ENCODE measurements at regions of chr20 and their contacts with region 1.

Region 1: GRCh38 chr20:16761305-16761829 is 13.2 kb downstream of the OTOR start:
- DNase-seq: peak in 8 of 9 experiments; percentile 18 to 74 (median 48)
- ATAC-seq: peak; percentile 69
- H3K4me3 ChIP-seq: no peak overlapping the region
- H3K4me3 Mint-ChIP-seq: no peak overlapping the region
- H3K27ac ChIP-seq: no peak overlapping the region
- H3K27ac Mint-ChIP-seq: no peak overlapping the region
- H3K4me1 ChIP-seq: no peaks in the 10 kb centered on the region
- H3K4me1 Mint-ChIP-seq: no peaks in the 10 kb centered on the region
- H3K27me3 ChIP-seq: no peaks in the 10 kb centered on the region
- H3K27me3 Mint-ChIP-seq: peaks cover 9% of the 10 kb centered on the region
- CTCF ChIP-seq: peak; percentile 61

Region 2: GRCh38 chr20:15708984-15709598 is 1052.3 kb before region 1 on chr20:
- CTCF ChIA-PET with region 1: no interaction called
- POLR2A ChIA-PET with region 1: no interaction called
- intact Hi-C with region 1: loop called in 1 of 2 experiments (anchors 5 kb)
- DNase-seq: peak in 6 of 9 experiments; percentile 4 to 24 (median 12)
- ATAC-seq: no peak
- H3K4me3 ChIP-seq: no peak overlapping the region
- H3K4me3 Mint-ChIP-seq: no peak overlapping the region
- H3K27ac ChIP-seq: no peak overlapping the region
- H3K27ac Mint-ChIP-seq: no peak overlapping the region
- H3K4me1 ChIP-seq: no peaks in the 10 kb centered on the region
- H3K4me1 Mint-ChIP-seq: no peaks in the 10 kb centered on the region
- H3K27me3 ChIP-seq: no peaks in the 10 kb centered on the region
- H3K27me3 Mint-ChIP-seq: no peaks in the 10 kb centered on the region
- CTCF ChIP-seq: no peak

Region 3: GRCh38 chr20:16517946-16518783 is 243.2 kb before region 1 on chr20:
- CTCF ChIA-PET with region 1: interaction called, 9 read pairs
- POLR2A ChIA-PET with region 1: no interaction called
- intact Hi-C with region 1: loop called (anchors 1 to 2 kb)
- DNase-seq: peak in 2 of 9 experiments; percentile 19 to 27
- ATAC-seq: no peak
- H3K4me3 ChIP-seq: no peak overlapping the region
- H3K4me3 Mint-ChIP-seq: no peak overlapping the region
- H3K27ac ChIP-seq: no peak overlapping the region
- H3K27ac Mint-ChIP-seq: no peak overlapping the region
- H3K4me1 ChIP-seq: no peaks in the 10 kb centered on the region
- H3K4me1 Mint-ChIP-seq: no peaks in the 10 kb centered on the region
- H3K27me3 ChIP-seq: no peaks in the 10 kb centered on the region
- H3K27me3 Mint-ChIP-seq: no peaks in the 10 kb centered on the region
- CTCF ChIP-seq: peak; percentile 21

Region 4: DNA sequence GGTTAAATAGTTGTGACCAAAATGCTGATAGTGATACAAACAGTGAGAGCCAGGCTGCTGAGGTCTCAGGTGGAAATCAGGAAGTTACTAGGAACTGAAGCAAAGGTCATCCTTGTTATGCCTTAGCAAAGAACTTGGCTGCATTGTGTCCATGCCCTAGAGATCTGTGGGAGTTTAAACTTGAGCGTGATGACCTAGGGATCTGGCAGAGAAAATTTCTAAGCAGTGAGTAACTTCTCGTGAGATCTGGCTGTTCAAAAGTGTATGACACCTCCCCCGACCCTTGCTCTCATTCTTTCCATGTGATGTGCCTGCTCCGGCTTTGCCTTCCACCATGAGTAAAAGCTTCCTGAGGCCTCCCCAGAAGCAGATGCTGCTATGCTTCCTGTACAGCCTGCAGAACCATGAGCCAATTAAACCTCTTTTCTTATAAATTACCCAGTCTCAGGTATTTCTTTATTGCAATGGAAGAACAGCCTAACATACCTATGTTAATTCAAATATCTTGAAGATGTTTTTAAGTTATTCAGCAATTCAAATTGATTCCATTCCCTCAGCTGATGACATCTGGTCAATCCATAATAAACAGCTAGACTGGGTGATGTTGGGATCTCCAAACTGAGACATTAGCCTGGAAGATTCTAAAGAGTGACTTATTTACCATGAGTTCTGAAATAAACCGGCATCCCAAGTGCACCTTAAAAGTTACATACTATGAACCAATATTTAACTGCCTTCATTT is 221.9 kb before region 1 on chr20:
- CTCF ChIA-PET with region 1: no interaction called
- POLR2A ChIA-PET with region 1: no interaction called
- intact Hi-C with region 1: no loop called
- DNase-seq: no peak
- ATAC-seq: no peak
- H3K4me3 ChIP-seq: no peak overlapping the region
- H3K4me3 Mint-ChIP-seq: no peak overlapping the region
- H3K27ac ChIP-seq: no peak overlapping the region
- H3K27ac Mint-ChIP-seq: no peak overlapping the region
- H3K4me1 ChIP-seq: no peaks in the 10 kb centered on the region
- H3K4me1 Mint-ChIP-seq: no peaks in the 10 kb centered on the region
- H3K27me3 ChIP-seq: no peaks in the 10 kb centered on the region
- H3K27me3 Mint-ChIP-seq: no peaks in the 10 kb centered on the region
- CTCF ChIP-seq: no peak

Region 5: DNA sequence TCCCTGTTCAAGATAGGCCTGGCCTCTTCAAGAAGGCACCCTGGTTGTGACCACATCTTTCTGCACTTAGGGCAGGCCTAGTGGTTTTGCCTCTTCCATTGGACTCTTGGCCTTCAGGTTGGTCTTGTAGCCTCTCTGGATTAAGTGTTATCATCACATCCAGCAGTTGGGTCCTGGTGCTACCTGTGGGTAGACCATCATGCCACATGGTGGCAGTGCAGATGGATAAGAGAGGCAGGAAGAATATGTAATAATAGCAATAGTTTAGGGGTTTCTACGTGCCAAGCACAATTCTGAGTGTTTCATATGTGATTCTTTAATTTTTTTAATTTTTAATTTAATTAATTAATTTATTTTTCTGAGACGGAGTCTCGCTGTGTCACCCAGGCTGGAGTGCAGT is 60.1 kb before region 1 on chr20:
- CTCF ChIA-PET with region 1: interaction called, 11 read pairs
- POLR2A ChIA-PET with region 1: no interaction called
- intact Hi-C with region 1: loop called (anchors 1 kb)
- DNase-seq: peak in 5 of 9 experiments; percentile 17 to 58 (median 33)
- ATAC-seq: peak; percentile 44
- H3K4me3 ChIP-seq: no peak overlapping the region
- H3K4me3 Mint-ChIP-seq: no peak overlapping the region
- H3K27ac ChIP-seq: no peak overlapping the region
- H3K27ac Mint-ChIP-seq: no peak overlapping the region
- H3K4me1 ChIP-seq: no peaks in the 10 kb centered on the region
- H3K4me1 Mint-ChIP-seq: no peaks in the 10 kb centered on the region
- H3K27me3 ChIP-seq: no peaks in the 10 kb centered on the region
- H3K27me3 Mint-ChIP-seq: peaks cover 36% of the 10 kb centered on the region
- CTCF ChIP-seq: peak; percentile 54

Region 6: DNA sequence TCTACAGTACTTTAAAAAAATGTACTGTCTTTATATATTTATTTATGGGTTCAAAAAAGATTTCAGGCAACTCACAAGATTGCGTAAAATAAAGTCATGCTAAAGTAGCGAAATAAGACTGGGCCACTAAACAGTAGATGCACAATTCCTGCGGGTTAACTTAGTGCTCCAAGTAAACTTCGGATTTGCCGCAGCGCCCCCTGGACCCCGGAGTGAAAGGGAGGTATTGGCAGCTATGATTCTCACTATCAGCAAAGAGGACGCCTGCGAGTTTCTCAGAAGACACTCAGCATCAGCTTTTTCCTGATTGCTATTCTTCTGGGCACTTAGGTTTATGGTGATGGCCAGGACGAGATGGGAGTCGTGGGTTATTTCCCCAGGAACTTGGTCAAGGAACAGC is 11.8 kb before region 1 on chr20:
- CTCF ChIA-PET with region 1: interaction called, 12 read pairs
- POLR2A ChIA-PET with region 1: no interaction called
- intact Hi-C with region 1: no loop called
- DNase-seq: no peak
- ATAC-seq: no peak
- H3K4me3 ChIP-seq: no peak overlapping the region
- H3K4me3 Mint-ChIP-seq: no peak overlapping the region
- H3K27ac ChIP-seq: no peak overlapping the region
- H3K27ac Mint-ChIP-seq: no peak overlapping the region
- H3K4me1 ChIP-seq: no peaks in the 10 kb centered on the region
- H3K4me1 Mint-ChIP-seq: no peaks in the 10 kb centered on the region
- H3K27me3 ChIP-seq: peaks cover 0 to 2% of the 10 kb centered on the region in 2 experiments
- H3K27me3 Mint-ChIP-seq: peaks cover 7% of the 10 kb centered on the region
- CTCF ChIP-seq: no peak